ENCODE measurements at regions of chr4 and their contacts with region 1.

Region 1: GRCh38 chr4:23135792-23136645 is 443.3 kb downstream of the GBA3 start:
- DNase-seq: peak; percentile 73
- ATAC-seq: no peak; the same call in 1 of the 2 replicates
- H3K4me3 ChIP-seq: no peak overlapping the region
- H3K27ac ChIP-seq: no peak overlapping the region
- H3K4me1 ChIP-seq: no peaks in the 10 kb centered on the region
- H3K27me3 ChIP-seq: no peaks in the 10 kb centered on the region
- CTCF ChIP-seq: peak; percentile 78

Region 2: GRCh38 chr4:22897520-22898108 is 238.4 kb before region 1 on chr4:
- CTCF ChIA-PET with region 1: no interaction called
- POLR2A ChIA-PET with region 1: no interaction called
- intact Hi-C with region 1: loop called (anchors 1 kb)
- DNase-seq: peak; percentile 34
- ATAC-seq: no peak
- H3K4me3 ChIP-seq: no peak overlapping the region
- H3K27ac ChIP-seq: no peak overlapping the region
- H3K4me1 ChIP-seq: no peaks in the 10 kb centered on the region
- H3K27me3 ChIP-seq: no peaks in the 10 kb centered on the region; the same call in 1 of the 2 replicates
- CTCF ChIP-seq: peak; percentile 80

Region 3: GRCh38 chr4:22962295-22962694 is 173.7 kb before region 1 on chr4:
- CTCF ChIA-PET with region 1: no interaction called
- POLR2A ChIA-PET with region 1: no interaction called
- intact Hi-C with region 1: loop called (anchors 2 kb)
- DNase-seq: peak; percentile 76
- ATAC-seq: peak; percentile 50
- H3K4me3 ChIP-seq: no peak overlapping the region
- H3K27ac ChIP-seq: no peak overlapping the region
- H3K4me1 ChIP-seq: no peaks in the 10 kb centered on the region
- H3K27me3 ChIP-seq: no peaks in the 10 kb centered on the region
- CTCF ChIP-seq: peak; percentile 79

Region 4: GRCh38 chr4:23060776-23061175 is 75.2 kb before region 1 on chr4:
- CTCF ChIA-PET with region 1: no interaction called
- POLR2A ChIA-PET with region 1: no interaction called
- intact Hi-C with region 1: loop called (anchors 10 kb)
- DNase-seq: peak; percentile 76
- ATAC-seq: peak; percentile 93
- H3K4me3 ChIP-seq: no peak overlapping the region
- H3K27ac ChIP-seq: peak overlapping the region; percentile 46
- H3K4me1 ChIP-seq: peaks cover 15% of the 10 kb centered on the region
- H3K27me3 ChIP-seq: no peaks in the 10 kb centered on the region
- CTCF ChIP-seq: no peak

Measured in PC-3 (cell line).